ENCODE measurements at regions of chr16 and their contacts with region 1.

Region 1: GRCh38 chr16:26325451-26325850 is 633.7 kb downstream of the HS3ST4 start:
- DNase-seq: no peak

Region 2: GRCh38 chr16:25729188-25729915 is 596.1 kb before region 1 on chr16:
- intact Hi-C with region 1: no loop called
- DNase-seq: no peak

Region 3: DNA sequence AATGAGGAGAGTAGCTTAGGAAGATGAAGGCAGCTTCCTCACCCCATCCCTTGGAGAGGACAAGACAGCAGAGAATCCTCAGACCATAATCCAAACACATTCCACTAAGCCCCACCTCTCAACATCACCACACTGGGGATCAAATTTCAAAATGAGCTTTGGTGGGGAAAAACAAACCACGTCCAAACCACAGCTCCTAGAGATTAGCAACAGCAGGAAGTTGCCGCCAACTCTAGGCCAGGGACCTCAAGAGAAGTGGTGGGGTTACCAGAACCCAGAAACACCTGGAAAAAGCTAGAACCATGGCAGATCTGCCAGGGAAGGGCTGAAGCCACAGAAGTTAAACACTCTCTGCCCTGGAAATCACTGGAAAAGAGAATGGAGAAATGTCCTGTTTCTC is 62.0 kb before region 1 on chr16:
- intact Hi-C with region 1: no loop called
- DNase-seq: no peak

Region 4: GRCh38 chr16:26281381-26282110 is 43.9 kb before region 1 on chr16:
- intact Hi-C with region 1: loop called in 1 of 2 experiments (anchors 1 kb)
- DNase-seq: no peak

Measured in posterior vena cava (tissue), 2 donors.